ENCODE measurements at regions of chr1 and their contacts with region 1.

Region 1: GRCh38 chr1:235027076-235027861 is 101.4 kb downstream of the TOMM20 start:
- DNase-seq: no peak
- ATAC-seq: no peak
- H3K4me3 ChIP-seq: no peak overlapping the region
- H3K4me3 Mint-ChIP-seq: no peak overlapping the region
- H3K27ac ChIP-seq: no peak overlapping the region
- H3K27ac Mint-ChIP-seq: no peak overlapping the region
- H3K4me1 ChIP-seq: peaks cover 0 to 4% of the 10 kb centered on the region in 2 experiments
- H3K4me1 Mint-ChIP-seq: peaks cover 0 to 8% (median 3%) of the 10 kb centered on the region in 3 donors
- H3K27me3 ChIP-seq: no peaks in the 10 kb centered on the region
- H3K27me3 Mint-ChIP-seq: no peaks in the 10 kb centered on the region

Region 2: DNA sequence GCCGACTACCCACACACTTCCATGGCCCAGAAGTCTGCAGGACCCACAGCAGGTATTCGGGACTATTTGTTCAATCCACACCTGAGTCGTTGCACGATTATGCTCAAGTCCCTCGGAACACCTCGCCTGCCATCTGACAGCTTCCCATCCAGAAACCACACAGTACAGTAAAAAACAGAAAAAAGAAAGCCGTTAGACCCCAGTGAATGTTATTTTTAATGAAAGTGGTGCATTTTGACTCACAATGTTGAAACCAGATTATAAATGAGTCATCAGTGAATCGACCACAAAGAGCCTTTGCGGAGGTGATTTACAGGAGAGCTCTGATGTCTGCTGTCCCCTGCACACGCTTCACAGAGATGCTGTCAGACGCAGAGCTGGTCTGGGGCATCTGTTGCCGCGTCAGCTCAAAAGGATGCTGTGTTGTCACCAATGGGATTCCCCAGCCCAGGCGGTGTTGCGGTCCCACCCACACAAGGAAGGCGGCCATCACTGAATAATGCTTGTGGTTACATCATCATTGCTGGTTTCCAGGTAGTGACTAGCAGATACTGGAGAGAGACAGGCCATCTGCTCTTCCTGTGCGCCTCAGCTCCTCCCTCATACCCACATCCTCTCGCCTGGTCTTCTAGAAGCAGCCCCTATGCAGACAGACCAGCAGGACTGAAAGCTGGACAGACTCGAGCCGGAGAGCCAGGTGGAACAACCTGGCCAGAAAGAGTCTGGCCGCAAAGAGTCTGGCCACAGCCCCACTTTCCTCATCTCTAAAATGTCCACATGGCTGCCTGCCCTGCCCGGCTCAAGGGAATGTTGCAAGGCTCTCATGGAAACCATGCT is 15.5 kb before region 1 on chr1:
- CTCF ChIA-PET with region 1: no interaction called
- POLR2A ChIA-PET with region 1: interaction called, 9 to 10 read pairs
- DNase-seq: peak; percentile 68 to 98 (median 94)
- ATAC-seq: peak; percentile 91 to 96 (median 94)
- H3K4me3 ChIP-seq: peak overlapping the region; percentile 42 to 48
- H3K4me3 Mint-ChIP-seq: peak overlapping the region; percentile 55 to 79 (median 61)
- H3K27ac ChIP-seq: peak overlapping the region; percentile 96
- H3K27ac Mint-ChIP-seq: peak overlapping the region; percentile 87 to 95
- H3K4me1 ChIP-seq: peaks cover 18 to 37% of the 10 kb centered on the region in 2 experiments
- H3K4me1 Mint-ChIP-seq: peaks cover 69 to 80% (median 71%) of the 10 kb centered on the region in 3 donors
- H3K27me3 ChIP-seq: no peaks in the 10 kb centered on the region
- H3K27me3 Mint-ChIP-seq: no peaks in the 10 kb centered on the region

Region 3: GRCh38 chr1:235246022-235246991 is 219.0 kb after region 1 on chr1:
- CTCF ChIA-PET with region 1: no interaction called
- POLR2A ChIA-PET with region 1: no interaction called
- DNase-seq: no peak
- ATAC-seq: no peak
- H3K4me3 ChIP-seq: no peak overlapping the region
- H3K4me3 Mint-ChIP-seq: peak overlapping the region in 1 of 3 donors; percentile 7
- H3K27ac ChIP-seq: no peak overlapping the region
- H3K27ac Mint-ChIP-seq: peak overlapping the region; percentile 30 to 85
- H3K4me1 ChIP-seq: peaks cover 5 to 23% of the 10 kb centered on the region in 2 experiments
- H3K4me1 Mint-ChIP-seq: peaks cover 34 to 48% (median 45%) of the 10 kb centered on the region in 3 donors
- H3K27me3 ChIP-seq: no peaks in the 10 kb centered on the region
- H3K27me3 Mint-ChIP-seq: no peaks in the 10 kb centered on the region

Region 4: GRCh38 chr1:236677641-236678235 is 1650.5 kb after region 1 on chr1:
- CTCF ChIA-PET with region 1: no interaction called
- POLR2A ChIA-PET with region 1: no interaction called
- DNase-seq: no peak
- ATAC-seq: no peak
- H3K4me3 ChIP-seq: no peak overlapping the region
- H3K4me3 Mint-ChIP-seq: no peak overlapping the region
- H3K27ac ChIP-seq: no peak overlapping the region
- H3K27ac Mint-ChIP-seq: no peak overlapping the region
- H3K4me1 ChIP-seq: no peaks in the 10 kb centered on the region
- H3K4me1 Mint-ChIP-seq: no peaks in the 10 kb centered on the region
- H3K27me3 ChIP-seq: peaks cover 0 to 3% of the 10 kb centered on the region in 2 experiments
- H3K27me3 Mint-ChIP-seq: peaks cover 9 to 12% of the 10 kb centered on the region in 2 donors

Measured in T-cell (primary cell).